ENCODE measurements at regions of chr14 and their contacts with region 1.

Region 1: DNA sequence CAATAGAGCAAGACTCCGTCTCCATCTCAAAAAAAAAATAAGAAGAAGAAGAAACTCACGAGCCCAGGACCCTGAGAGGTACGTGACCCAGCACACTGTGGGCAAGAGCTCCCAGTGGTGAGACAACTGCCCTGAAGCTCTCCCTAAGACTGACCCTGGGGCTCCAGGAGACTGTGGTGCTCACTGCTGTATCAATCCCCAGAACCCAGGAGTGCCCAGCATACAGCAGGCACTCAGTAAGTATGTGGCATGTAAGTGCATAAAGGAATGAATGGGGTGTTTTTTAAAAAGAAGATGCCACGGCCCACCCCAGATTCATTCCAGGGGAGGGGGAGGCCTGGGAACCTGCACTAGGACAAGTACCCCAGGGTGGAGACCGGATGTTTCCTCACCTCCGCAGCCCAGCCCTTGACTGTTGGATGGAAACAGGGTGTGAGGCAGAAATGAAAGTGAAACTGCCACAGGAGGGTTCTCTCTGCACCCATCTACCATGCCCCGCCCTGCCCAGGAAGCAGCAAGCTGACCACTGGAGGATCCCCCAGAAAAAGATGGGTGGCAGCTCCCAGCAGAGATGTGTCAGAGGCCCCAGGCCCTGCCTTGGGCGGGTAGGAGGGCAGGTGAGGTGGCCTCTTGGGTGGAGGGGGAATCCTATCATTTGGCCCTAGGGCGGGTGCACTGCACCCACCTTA is 12.2 kb downstream of the ITPK1 start:
- DNase-seq: peak; percentile 17 to 89 (median 75)
- ATAC-seq: peak; percentile 95
- H3K4me3 ChIP-seq: peak overlapping the region; percentile 32 to 47
- H3K4me3 Mint-ChIP-seq: peak overlapping the region; percentile 83
- H3K27ac ChIP-seq: peak overlapping the region; percentile 39 to 87
- H3K27ac Mint-ChIP-seq: peak overlapping the region; percentile 93
- H3K4me1 ChIP-seq: peaks cover 33% of the 10 kb centered on the region
- H3K4me1 Mint-ChIP-seq: peaks cover 34% of the 10 kb centered on the region
- H3K27me3 ChIP-seq: no peaks in the 10 kb centered on the region
- H3K27me3 Mint-ChIP-seq: no peaks in the 10 kb centered on the region
- CTCF ChIP-seq: no peak

Region 2: GRCh38 chr14:93132470-93133065 is 29.0 kb after region 1 on chr14:
- CTCF ChIA-PET with region 1: interaction called, 10 read pairs
- POLR2A ChIA-PET with region 1: no interaction called
- intact Hi-C with region 1: no loop called
- DNase-seq: peak in 7 of 9 experiments; percentile 14 to 67 (median 44)
- ATAC-seq: peak; percentile 56
- H3K4me3 ChIP-seq: no peak overlapping the region
- H3K4me3 Mint-ChIP-seq: no peak overlapping the region
- H3K27ac ChIP-seq: no peak overlapping the region
- H3K27ac Mint-ChIP-seq: no peak overlapping the region
- H3K4me1 ChIP-seq: no peaks in the 10 kb centered on the region
- H3K4me1 Mint-ChIP-seq: no peaks in the 10 kb centered on the region
- H3K27me3 ChIP-seq: peaks cover 0 to 2% of the 10 kb centered on the region in 2 experiments
- H3K27me3 Mint-ChIP-seq: no peaks in the 10 kb centered on the region
- CTCF ChIP-seq: peak; percentile 32